Transverse colon (tissue), 4 donors: ENCODE measurements at regions of chr2 and their contacts with region 1.

Region 1: GRCh38 chr2:146879882-146880281 is 964.9 kb upstream of the ACVR2A start:
- DNase-seq: no peak
- H3K4me3 ChIP-seq: no peak overlapping the region
- H3K27ac ChIP-seq: no peak overlapping the region
- H3K4me1 ChIP-seq: no peaks in the 10 kb centered on the region
- H3K27me3 ChIP-seq: no peaks in the 10 kb centered on the region
- CTCF ChIP-seq: no peak
- EP300 ChIP-seq: no peak
- POLR2A ChIP-seq: no peak

Region 2: DNA sequence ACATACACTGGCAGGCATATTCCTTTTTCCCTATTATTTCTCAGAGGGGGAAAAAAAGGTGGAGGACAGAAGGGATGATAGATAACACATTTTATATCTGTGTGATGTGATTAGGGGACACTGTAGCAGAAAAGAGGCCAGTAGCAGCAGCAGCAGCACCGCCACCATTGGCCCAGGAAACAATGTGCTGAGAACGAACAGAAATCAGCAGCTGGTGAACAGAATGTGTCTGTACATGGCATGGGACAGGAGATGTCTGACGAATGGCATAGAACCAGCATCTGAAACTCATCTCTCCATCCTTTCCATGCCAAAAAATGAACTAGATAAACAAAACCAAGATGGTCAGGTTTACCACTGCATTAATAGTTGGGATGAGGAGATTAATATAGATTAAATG is 28.9 kb after region 1 on chr2:
- in situ Hi-C with region 1: no loop called
- intact Hi-C with region 1: loop called (anchors 1 kb)
- DNase-seq: no peak
- H3K4me3 ChIP-seq: no peak overlapping the region
- H3K27ac ChIP-seq: no peak overlapping the region
- H3K4me1 ChIP-seq: no peaks in the 10 kb centered on the region
- H3K27me3 ChIP-seq: no peaks in the 10 kb centered on the region
- CTCF ChIP-seq: no peak
- EP300 ChIP-seq: no peak
- POLR2A ChIP-seq: no peak

Region 3: DNA sequence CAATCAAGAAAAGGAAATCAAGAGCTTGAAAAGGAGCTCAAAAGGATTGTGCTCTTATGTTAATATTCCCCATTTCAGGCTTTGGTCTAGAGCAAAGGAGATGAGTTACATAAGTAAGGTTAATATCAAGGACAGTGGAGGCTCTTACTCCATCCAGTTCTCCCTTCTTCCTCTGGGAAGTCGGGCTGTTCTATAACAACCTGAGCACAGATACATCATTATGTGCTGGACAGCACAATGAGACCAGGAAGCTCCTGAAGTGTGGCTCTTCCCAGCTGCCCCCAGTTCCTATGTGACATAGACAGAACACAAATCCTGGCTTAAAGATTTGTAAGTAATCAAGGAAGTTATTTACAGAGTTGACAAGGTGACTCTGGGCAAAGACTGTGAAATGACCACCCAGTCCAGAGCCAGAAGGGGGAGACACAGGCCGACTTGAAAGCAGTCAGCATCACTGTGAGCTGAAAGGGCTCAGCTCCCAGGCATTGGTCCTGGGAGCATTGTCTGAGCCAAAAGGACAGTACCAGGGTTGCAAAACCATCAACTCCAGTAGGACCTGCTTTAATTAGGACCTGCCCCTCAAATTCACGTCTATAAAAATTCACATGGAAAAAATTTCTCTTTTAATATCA is 47.3 kb after region 1 on chr2:
- in situ Hi-C with region 1: no loop called
- intact Hi-C with region 1: no loop called
- DNase-seq: peak; percentile 27
- H3K4me3 ChIP-seq: no peak overlapping the region
- H3K27ac ChIP-seq: no peak overlapping the region
- H3K4me1 ChIP-seq: no peaks in the 10 kb centered on the region
- H3K27me3 ChIP-seq: no peaks in the 10 kb centered on the region
- CTCF ChIP-seq: peak; percentile 39 to 54 (median 47)
- EP300 ChIP-seq: no peak
- POLR2A ChIP-seq: no peak

Region 4: DNA sequence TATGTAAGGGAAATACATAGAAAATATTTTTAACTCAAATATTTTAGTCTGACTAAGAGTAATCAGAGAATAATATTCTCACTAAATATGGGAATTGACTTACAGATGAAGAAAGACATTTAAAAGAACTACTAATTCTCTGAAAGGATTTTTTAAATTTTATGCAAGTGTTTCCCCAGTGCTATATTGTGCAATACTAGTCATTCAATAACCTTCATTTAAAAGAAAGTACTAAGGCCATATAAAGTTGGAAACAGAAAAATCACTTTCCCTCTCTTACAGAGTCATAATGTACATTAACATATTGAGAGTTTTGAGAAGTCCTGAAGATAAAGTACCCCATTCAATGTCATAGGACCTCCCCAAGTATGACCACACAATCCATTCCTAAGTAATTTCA is 380.4 kb after region 1 on chr2:
- in situ Hi-C with region 1: no loop called
- intact Hi-C with region 1: no loop called
- DNase-seq: no peak
- H3K4me3 ChIP-seq: no peak overlapping the region
- H3K27ac ChIP-seq: no peak overlapping the region
- H3K4me1 ChIP-seq: no peaks in the 10 kb centered on the region
- H3K27me3 ChIP-seq: no peaks in the 10 kb centered on the region
- CTCF ChIP-seq: no peak
- EP300 ChIP-seq: no peak
- POLR2A ChIP-seq: no peak